ENCODE measurements at regions of chr3 and their contacts with region 1.

Region 1: GRCh38 chr3:33063651-33064051 is 33.3 kb downstream of the GLB1 start:
- DNase-seq: peak; percentile 48 to 84 (median 49)
- H3K4me3 ChIP-seq: no peak overlapping the region
- H3K4me3 Mint-ChIP-seq: peak overlapping the region; percentile 7 to 86 (median 78)
- H3K27ac ChIP-seq: peak overlapping the region; percentile 71
- H3K27ac Mint-ChIP-seq: peak overlapping the region; percentile 89 to 100 (median 99)
- H3K4me1 ChIP-seq: peaks cover 83% of the 10 kb centered on the region
- H3K4me1 Mint-ChIP-seq: peaks cover 60 to 91% (median 73%) of the 10 kb centered on the region in 4 donors
- H3K27me3 ChIP-seq: no peaks in the 10 kb centered on the region
- H3K27me3 Mint-ChIP-seq: no peaks in the 10 kb centered on the region

Region 2: GRCh38 chr3:32960404-32961170 is 103.1 kb before region 1 on chr3:
- CTCF ChIA-PET with region 1: interaction called, 402 read pairs
- POLR2A ChIA-PET with region 1: interaction called, 60 read pairs
- intact Hi-C with region 1: no loop called
- DNase-seq: peak; percentile 45 to 66 (median 55)
- H3K4me3 ChIP-seq: no peak overlapping the region
- H3K4me3 Mint-ChIP-seq: peak overlapping the region in 7 of 8 donors; percentile 18 to 75 (median 64)
- H3K27ac ChIP-seq: peak overlapping the region; percentile 31
- H3K27ac Mint-ChIP-seq: peak overlapping the region; percentile 63 to 99 (median 92)
- H3K4me1 ChIP-seq: peaks cover 71% of the 10 kb centered on the region
- H3K4me1 Mint-ChIP-seq: peaks cover 35 to 66% (median 56%) of the 10 kb centered on the region in 4 donors
- H3K27me3 ChIP-seq: no peaks in the 10 kb centered on the region
- H3K27me3 Mint-ChIP-seq: no peaks in the 10 kb centered on the region

Region 3: GRCh38 chr3:33016851-33017405 is 46.7 kb before region 1 on chr3:
- CTCF ChIA-PET with region 1: interaction called, 14 read pairs
- POLR2A ChIA-PET with region 1: interaction called, 32 read pairs
- intact Hi-C with region 1: no loop called
- DNase-seq: no peak
- H3K4me3 ChIP-seq: no peak overlapping the region
- H3K4me3 Mint-ChIP-seq: peak overlapping the region; percentile 28 to 79 (median 55)
- H3K27ac ChIP-seq: peak overlapping the region; percentile 11
- H3K27ac Mint-ChIP-seq: peak overlapping the region; percentile 2 to 96 (median 82)
- H3K4me1 ChIP-seq: peaks cover 71% of the 10 kb centered on the region
- H3K4me1 Mint-ChIP-seq: peaks cover 58 to 96% (median 77%) of the 10 kb centered on the region in 4 donors
- H3K27me3 ChIP-seq: no peaks in the 10 kb centered on the region
- H3K27me3 Mint-ChIP-seq: no peaks in the 10 kb centered on the region

Region 4: DNA sequence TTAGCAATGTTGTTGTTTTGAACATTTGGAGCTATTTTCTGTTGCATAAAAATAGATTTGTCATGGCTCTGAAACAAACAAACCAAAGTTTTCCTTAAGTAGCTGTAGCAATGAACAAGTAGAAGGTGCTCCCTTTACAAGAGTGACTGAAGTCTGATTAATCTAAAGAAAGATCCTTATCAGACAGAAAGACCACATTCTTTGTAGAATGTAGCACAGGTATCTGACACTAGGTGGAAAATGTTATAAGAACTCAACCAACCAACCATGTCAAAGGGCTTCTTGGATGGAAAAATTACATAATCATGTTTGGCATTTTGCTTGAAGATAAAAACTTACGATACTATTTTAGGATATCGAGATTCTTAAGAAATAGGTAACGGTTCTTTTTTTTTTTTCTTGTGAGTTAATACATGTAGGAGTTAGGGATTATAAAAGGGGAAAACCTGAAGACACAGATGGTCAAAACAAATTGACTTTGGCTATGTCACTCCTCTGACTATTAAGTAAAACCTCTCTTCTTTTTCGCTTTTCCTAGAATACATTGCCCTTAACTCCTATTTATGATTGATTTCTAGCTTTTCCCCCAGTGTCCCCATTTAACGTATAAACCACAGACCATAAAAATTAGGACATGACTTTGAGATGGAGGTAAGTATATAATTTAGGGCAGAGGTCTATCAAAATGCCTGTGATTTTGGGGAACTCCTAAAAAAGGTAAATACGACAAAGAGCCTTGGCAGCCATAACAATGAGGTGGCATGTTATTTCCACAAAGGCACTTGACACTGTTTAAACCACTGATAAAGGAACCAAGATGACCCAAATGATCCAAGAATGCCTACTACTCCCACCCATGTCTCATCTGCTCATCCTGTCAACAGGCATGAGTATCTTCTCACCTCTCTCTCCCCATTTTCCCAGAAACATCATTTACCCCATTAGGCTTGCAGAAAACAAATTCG is 40.2 kb before region 1 on chr3:
- CTCF ChIA-PET with region 1: interaction called, 171 read pairs
- POLR2A ChIA-PET with region 1: interaction called, 687 read pairs
- intact Hi-C with region 1: loop called (anchors 1 kb)
- DNase-seq: peak in 4 of 5 donors; percentile 50 to 71 (median 58)
- H3K4me3 ChIP-seq: no peak overlapping the region
- H3K4me3 Mint-ChIP-seq: peak overlapping the region; percentile 10 to 81 (median 70)
- H3K27ac ChIP-seq: peak overlapping the region; percentile 34
- H3K27ac Mint-ChIP-seq: peak overlapping the region; percentile 87 to 96 (median 92)
- H3K4me1 ChIP-seq: peaks cover 62% of the 10 kb centered on the region
- H3K4me1 Mint-ChIP-seq: peaks cover 48 to 76% (median 58%) of the 10 kb centered on the region in 4 donors
- H3K27me3 ChIP-seq: no peaks in the 10 kb centered on the region
- H3K27me3 Mint-ChIP-seq: no peaks in the 10 kb centered on the region

Region 5: DNA sequence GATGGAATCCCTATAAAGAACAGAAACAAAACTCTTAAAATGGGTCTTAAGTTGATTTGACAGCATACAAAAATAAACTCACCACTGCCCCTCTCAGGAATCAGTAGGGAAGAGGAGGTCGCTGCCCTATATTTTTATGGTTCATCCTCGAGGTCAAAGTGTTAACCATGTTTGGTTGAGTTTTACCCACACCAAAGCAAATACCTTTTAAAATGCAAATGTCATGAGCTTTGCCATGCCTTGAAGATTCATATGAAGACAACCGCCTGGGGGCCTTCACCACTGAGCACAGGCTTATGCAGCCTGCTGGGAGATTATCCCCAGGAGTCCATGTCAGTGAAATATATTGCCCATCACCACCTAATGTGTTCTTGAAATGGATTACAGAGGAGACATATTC is 32.8 kb before region 1 on chr3:
- CTCF ChIA-PET with region 1: interaction called, 171 read pairs
- POLR2A ChIA-PET with region 1: interaction called, 687 read pairs
- intact Hi-C with region 1: loop called (anchors 1 kb)
- DNase-seq: peak; percentile 58 to 77 (median 72)
- H3K4me3 ChIP-seq: no peak overlapping the region
- H3K4me3 Mint-ChIP-seq: peak overlapping the region in 7 of 8 donors; percentile 32 to 73 (median 54)
- H3K27ac ChIP-seq: no peak overlapping the region
- H3K27ac Mint-ChIP-seq: peak overlapping the region; percentile 52 to 94 (median 83)
- H3K4me1 ChIP-seq: peaks cover 29% of the 10 kb centered on the region
- H3K4me1 Mint-ChIP-seq: peaks cover 24 to 49% (median 31%) of the 10 kb centered on the region in 4 donors
- H3K27me3 ChIP-seq: no peaks in the 10 kb centered on the region
- H3K27me3 Mint-ChIP-seq: no peaks in the 10 kb centered on the region

Region 6: GRCh38 chr3:33037471-33037870 is 26.2 kb before region 1 on chr3:
- CTCF ChIA-PET with region 1: interaction called, 171 read pairs
- POLR2A ChIA-PET with region 1: interaction called, 687 read pairs
- intact Hi-C with region 1: no loop called
- DNase-seq: no peak
- H3K4me3 ChIP-seq: no peak overlapping the region
- H3K4me3 Mint-ChIP-seq: no peak overlapping the region
- H3K27ac ChIP-seq: no peak overlapping the region
- H3K27ac Mint-ChIP-seq: peak overlapping the region in 1 of 7 donors; percentile 42
- H3K4me1 ChIP-seq: peaks cover 25% of the 10 kb centered on the region
- H3K4me1 Mint-ChIP-seq: peaks cover 24 to 42% (median 33%) of the 10 kb centered on the region in 4 donors
- H3K27me3 ChIP-seq: no peaks in the 10 kb centered on the region
- H3K27me3 Mint-ChIP-seq: no peaks in the 10 kb centered on the region

Measured in CD4-positive, alpha-beta memory T cell (primary cell).